Activated CD4-positive, alpha-beta memory T cell treated with anti-CD3 and anti-CD28 coated beads for 36 hours (primary cell): ENCODE measurements at regions of chr4 and their contacts with region 1.

Region 1: GRCh38 chr4:42627885-42628646 is 28.8 kb downstream of the ATP8A1 start:
- DNase-seq: peak; percentile 49
- H3K4me3 Mint-ChIP-seq: peak overlapping the region; percentile 36
- H3K27ac Mint-ChIP-seq: peak overlapping the region; percentile 83
- H3K4me1 Mint-ChIP-seq: peaks cover 46% of the 10 kb centered on the region
- H3K27me3 Mint-ChIP-seq: no peaks in the 10 kb centered on the region

Region 2: GRCh38 chr4:42579903-42580302 is 48.2 kb before region 1 on chr4:
- CTCF ChIA-PET with region 1: no interaction called
- POLR2A ChIA-PET with region 1: no interaction called
- intact Hi-C with region 1: loop called (anchors 1 kb)
- DNase-seq: no peak
- H3K4me3 Mint-ChIP-seq: no peak overlapping the region
- H3K27ac Mint-ChIP-seq: peak overlapping the region; percentile 28
- H3K4me1 Mint-ChIP-seq: peaks cover 11% of the 10 kb centered on the region
- H3K27me3 Mint-ChIP-seq: no peaks in the 10 kb centered on the region

Region 3: DNA sequence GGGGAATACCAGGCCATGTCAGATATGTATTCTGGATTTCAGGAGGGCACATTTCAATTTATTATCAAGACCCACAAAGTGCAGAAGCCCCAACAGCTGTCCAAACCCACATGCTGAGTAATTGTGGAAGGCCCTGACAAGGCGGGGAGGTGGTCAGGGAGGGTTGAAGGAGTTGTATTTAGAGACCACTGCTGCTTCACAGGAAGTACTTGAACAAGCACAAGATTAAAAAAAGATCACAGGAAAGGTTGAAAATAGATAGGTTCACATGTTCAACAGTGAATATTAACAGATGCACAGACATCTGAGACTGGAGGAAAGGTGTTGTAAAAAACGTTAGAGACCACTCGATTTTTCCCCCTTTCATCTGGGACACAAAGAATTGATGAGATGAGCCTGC is 10.9 kb after region 1 on chr4:
- CTCF ChIA-PET with region 1: no interaction called
- POLR2A ChIA-PET with region 1: no interaction called
- intact Hi-C with region 1: loop called (anchors 1 kb)
- DNase-seq: peak; percentile 47
- H3K4me3 Mint-ChIP-seq: no peak overlapping the region
- H3K27ac Mint-ChIP-seq: no peak overlapping the region
- H3K4me1 Mint-ChIP-seq: peaks cover 65% of the 10 kb centered on the region
- H3K27me3 Mint-ChIP-seq: no peaks in the 10 kb centered on the region